ENCODE measurements at regions of chr16 and their contacts with region 1.

Region 1: GRCh38 chr16:22001591-22001990 is 675 bp upstream of the PDZD9 start:
- DNase-seq: no peak
- H3K4me3 Mint-ChIP-seq: peak overlapping the region; percentile 56
- H3K27ac Mint-ChIP-seq: no peak overlapping the region
- H3K4me1 Mint-ChIP-seq: peaks cover 22% of the 10 kb centered on the region
- H3K27me3 Mint-ChIP-seq: no peaks in the 10 kb centered on the region
- CTCF ChIP-seq: no peak

Region 2: DNA sequence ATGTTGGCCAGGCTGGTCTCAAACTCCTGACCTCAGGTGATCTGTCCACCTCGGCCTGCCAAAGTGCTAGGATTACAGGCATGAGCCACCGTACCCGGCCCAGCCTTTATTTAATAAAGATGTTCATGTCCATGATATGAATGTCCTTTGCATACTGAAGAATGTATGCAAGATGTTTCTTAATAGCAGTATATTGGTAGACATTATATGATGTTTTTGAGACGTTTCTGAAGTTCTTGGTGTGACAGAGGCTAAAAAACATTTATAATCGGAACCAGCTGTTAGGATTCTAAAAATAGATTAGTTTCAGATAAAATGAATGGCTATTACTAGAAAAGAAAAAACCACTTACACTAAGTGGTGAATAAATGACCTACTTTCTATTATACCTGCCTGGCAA is 12.5 kb before region 1 on chr16:
- CTCF ChIA-PET with region 1: interaction called, 25 read pairs
- POLR2A ChIA-PET with region 1: interaction called, 5 read pairs
- intact Hi-C with region 1: no loop called
- DNase-seq: no peak
- H3K4me3 Mint-ChIP-seq: no peak overlapping the region
- H3K27ac Mint-ChIP-seq: no peak overlapping the region
- H3K4me1 Mint-ChIP-seq: no peaks in the 10 kb centered on the region
- H3K27me3 Mint-ChIP-seq: no peaks in the 10 kb centered on the region
- CTCF ChIP-seq: no peak

Region 3: GRCh38 chr16:22070361-22071330 is 69.1 kb after region 1 on chr16:
- CTCF ChIA-PET with region 1: interaction called, 502 read pairs
- POLR2A ChIA-PET with region 1: interaction called, 78 read pairs
- intact Hi-C with region 1: no loop called
- DNase-seq: peak; percentile 63
- H3K4me3 Mint-ChIP-seq: no peak overlapping the region
- H3K27ac Mint-ChIP-seq: no peak overlapping the region
- H3K4me1 Mint-ChIP-seq: peaks cover 2% of the 10 kb centered on the region
- H3K27me3 Mint-ChIP-seq: no peaks in the 10 kb centered on the region
- CTCF ChIP-seq: no peak

Region 4: DNA sequence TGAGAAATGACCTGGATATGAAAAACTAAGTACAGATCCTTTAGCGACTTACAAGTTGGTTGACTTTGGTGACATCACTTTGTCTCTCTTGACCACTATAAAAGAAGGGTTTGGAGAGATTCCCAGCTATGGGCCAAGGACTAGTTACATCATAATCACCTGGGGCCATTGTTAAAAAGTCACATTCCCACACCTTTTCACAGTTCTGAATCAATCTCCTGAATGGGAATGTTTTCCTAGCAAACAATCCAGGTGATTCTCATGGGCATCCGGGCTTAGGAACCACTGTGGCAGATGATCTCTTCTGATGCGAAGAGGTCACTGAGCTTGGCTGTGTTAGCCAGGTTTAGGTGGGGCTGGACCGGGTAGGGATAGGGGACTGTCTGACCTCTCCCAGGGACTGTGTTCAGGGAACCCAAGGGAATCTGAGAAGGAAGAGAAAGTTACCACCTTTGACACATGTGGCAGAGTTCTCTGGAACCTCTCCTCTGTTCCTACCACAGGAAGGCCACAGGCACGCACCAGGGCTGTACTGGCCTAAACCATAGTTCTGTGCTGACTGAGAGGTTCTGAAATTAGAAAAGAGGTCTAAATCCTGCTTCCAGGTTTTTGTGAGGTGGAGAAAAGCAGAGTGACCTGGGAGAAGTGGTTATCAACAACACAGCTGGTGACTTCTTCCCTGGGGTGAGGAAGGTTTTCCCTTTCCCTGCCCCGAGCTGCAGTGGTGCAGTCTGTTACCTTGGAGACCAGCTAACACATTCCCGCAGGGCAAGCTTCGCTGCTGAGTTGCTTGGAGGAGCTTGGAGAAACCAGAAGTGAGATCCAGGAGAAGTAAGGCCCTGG is 90.4 kb after region 1 on chr16 and contains the start of gene VWA3A:
- CTCF ChIA-PET with region 1: interaction called, 12 read pairs
- POLR2A ChIA-PET with region 1: no interaction called
- intact Hi-C with region 1: no loop called
- DNase-seq: peak; percentile 13
- H3K4me3 Mint-ChIP-seq: no peak within 1 kb of the TSS
- H3K27ac Mint-ChIP-seq: no peak within 1 kb of the TSS
- H3K4me1 Mint-ChIP-seq: no peaks in the 10 kb centered on the region
- H3K27me3 Mint-ChIP-seq: peaks cover 2% of the 10 kb centered on the region
- CTCF ChIP-seq: no peak
- total RNA-seq, gene VWA3A: 0.12 TPM in 1 of 2 replicates, not detected in the other

Region 5: GRCh38 chr16:22174642-22175041 is 173.1 kb after region 1 on chr16:
- CTCF ChIA-PET with region 1: interaction called, 11 read pairs
- POLR2A ChIA-PET with region 1: interaction called, 4 read pairs
- intact Hi-C with region 1: no loop called
- DNase-seq: no peak
- H3K4me3 Mint-ChIP-seq: no peak overlapping the region
- H3K27ac Mint-ChIP-seq: no peak overlapping the region
- H3K4me1 Mint-ChIP-seq: no peaks in the 10 kb centered on the region
- H3K27me3 Mint-ChIP-seq: peaks cover 16% of the 10 kb centered on the region
- CTCF ChIP-seq: no peak

Region 6: GRCh38 chr16:22955461-22956070 is 954.0 kb after region 1 on chr16:
- CTCF ChIA-PET with region 1: no interaction called
- POLR2A ChIA-PET with region 1: no interaction called
- intact Hi-C with region 1: no loop called
- DNase-seq: no peak
- H3K4me3 Mint-ChIP-seq: no peak overlapping the region
- H3K27ac Mint-ChIP-seq: no peak overlapping the region
- H3K4me1 Mint-ChIP-seq: no peaks in the 10 kb centered on the region
- H3K27me3 Mint-ChIP-seq: peaks cover 86% of the 10 kb centered on the region
- CTCF ChIP-seq: no peak

Region 7: GRCh38 chr16:22977294-22977697 is 975.7 kb after region 1 on chr16:
- CTCF ChIA-PET with region 1: no interaction called
- POLR2A ChIA-PET with region 1: no interaction called
- intact Hi-C with region 1: no loop called
- DNase-seq: peak; percentile 10
- H3K4me3 Mint-ChIP-seq: no peak overlapping the region
- H3K27ac Mint-ChIP-seq: no peak overlapping the region
- H3K4me1 Mint-ChIP-seq: no peaks in the 10 kb centered on the region
- H3K27me3 Mint-ChIP-seq: peaks cover 39% of the 10 kb centered on the region
- CTCF ChIP-seq: peak; percentile 35